ENCODE measurements at regions of chr12 and their contacts with region 1.

Region 1: GRCh38 chr12:112992541-112993398 is 14.5 kb downstream of the OAS2 start:
- DNase-seq: peak; percentile 88
- H3K4me3 Mint-ChIP-seq: no peak overlapping the region
- H3K27ac Mint-ChIP-seq: peak overlapping the region; percentile 22
- H3K4me1 Mint-ChIP-seq: peaks cover 28% of the 10 kb centered on the region
- H3K27me3 Mint-ChIP-seq: no peaks in the 10 kb centered on the region

Region 2: DNA sequence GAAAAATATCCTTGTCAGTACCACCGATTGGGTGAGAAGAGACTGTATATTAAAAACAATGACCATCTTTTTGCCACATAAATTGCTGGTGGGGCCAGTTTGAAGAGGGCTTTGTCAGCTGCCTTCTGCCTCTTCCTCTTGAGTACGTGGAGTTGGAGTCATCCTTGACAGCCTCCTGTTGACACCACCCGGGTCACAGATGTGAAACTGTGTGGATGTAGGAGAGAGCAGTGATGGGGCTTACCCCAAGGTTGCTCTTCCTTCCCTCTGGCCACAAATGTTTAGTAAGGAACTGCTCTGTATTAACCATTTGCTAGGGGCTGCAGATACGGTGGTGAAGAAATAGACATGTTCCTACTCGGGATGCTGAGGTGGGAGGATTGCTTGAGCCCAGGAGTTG is 561.8 kb before region 1 on chr12:
- CTCF ChIA-PET with region 1: no interaction called
- intact Hi-C with region 1: loop called (anchors 10 kb)
- DNase-seq: peak; percentile 62
- H3K4me3 Mint-ChIP-seq: peak overlapping the region; percentile 7
- H3K27ac Mint-ChIP-seq: peak overlapping the region; percentile 83
- H3K4me1 Mint-ChIP-seq: peaks cover 46% of the 10 kb centered on the region
- H3K27me3 Mint-ChIP-seq: no peaks in the 10 kb centered on the region

Region 3: GRCh38 chr12:112906712-112907414 is 85.9 kb before region 1 on chr12 and contains the start of gene OAS1:
- CTCF ChIA-PET with region 1: interaction called, 29 read pairs
- intact Hi-C with region 1: no loop called
- DNase-seq: peak; percentile 59
- H3K4me3 Mint-ChIP-seq: peak within 1 kb of the TSS; percentile 87
- H3K27ac Mint-ChIP-seq: peak within 1 kb of the TSS; percentile 81
- H3K4me1 Mint-ChIP-seq: peaks cover 62% of the 10 kb centered on the region
- H3K27me3 Mint-ChIP-seq: no peaks in the 10 kb centered on the region
- total RNA-seq, gene OAS1: 41.6 to 41.7 TPM

Region 4: GRCh38 chr12:113005754-113006153 is 13.0 kb after region 1 on chr12:
- CTCF ChIA-PET with region 1: interaction called, 30 read pairs
- intact Hi-C with region 1: no loop called
- DNase-seq: no peak
- H3K4me3 Mint-ChIP-seq: no peak overlapping the region
- H3K27ac Mint-ChIP-seq: no peak overlapping the region
- H3K4me1 Mint-ChIP-seq: no peaks in the 10 kb centered on the region
- H3K27me3 Mint-ChIP-seq: no peaks in the 10 kb centered on the region

Region 5: GRCh38 chr12:113098446-113098896 is 105.7 kb after region 1 on chr12:
- CTCF ChIA-PET with region 1: interaction called, 12 read pairs
- intact Hi-C with region 1: loop called (anchors 2 kb)
- DNase-seq: peak; percentile 88
- H3K4me3 Mint-ChIP-seq: no peak overlapping the region
- H3K27ac Mint-ChIP-seq: no peak overlapping the region
- H3K4me1 Mint-ChIP-seq: peaks cover 18% of the 10 kb centered on the region
- H3K27me3 Mint-ChIP-seq: no peaks in the 10 kb centered on the region

Region 6: GRCh38 chr12:113174461-113175384 is 182.0 kb after region 1 on chr12:
- CTCF ChIA-PET with region 1: interaction called, 4 read pairs
- intact Hi-C with region 1: loop called (anchors 2 kb)
- DNase-seq: peak; percentile 86
- H3K4me3 Mint-ChIP-seq: no peak overlapping the region
- H3K27ac Mint-ChIP-seq: no peak overlapping the region
- H3K4me1 Mint-ChIP-seq: no peaks in the 10 kb centered on the region
- H3K27me3 Mint-ChIP-seq: no peaks in the 10 kb centered on the region